Lower leg skin (tissue), 4 donors: ENCODE measurements at regions of chr17 and their contacts with region 1.

Region 1: GRCh38 chr17:58066401-58066800 is 16.8 kb upstream of the DYNLL2 start:
- DNase-seq: no peak
- H3K4me3 ChIP-seq: no peak overlapping the region
- CTCF ChIP-seq: no peak
- POLR2A ChIP-seq: no peak

Region 2: DNA sequence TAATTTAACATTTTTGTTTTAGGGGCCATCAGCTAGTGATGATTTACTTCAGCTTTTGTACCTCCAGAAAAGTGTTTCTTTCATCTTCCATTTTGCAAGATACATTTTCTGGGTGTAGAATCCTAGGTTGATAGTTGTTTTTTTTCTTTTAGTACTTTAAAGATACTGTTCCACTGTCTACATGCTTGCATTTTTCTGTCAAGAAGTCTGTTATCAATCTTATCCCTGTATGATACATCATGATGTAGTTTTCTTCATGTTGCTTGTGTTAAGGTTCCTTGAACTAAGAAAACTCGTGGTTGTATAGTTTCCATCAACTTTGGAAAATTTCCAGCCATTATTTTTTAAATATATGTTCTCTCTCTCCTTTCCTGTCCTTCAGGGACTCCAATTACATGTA is 40.9 kb after region 1 on chr17:
- intact Hi-C with region 1: loop called (anchors 2 kb)
- DNase-seq: no peak
- H3K4me3 ChIP-seq: no peak overlapping the region
- CTCF ChIP-seq: no peak
- POLR2A ChIP-seq: no peak